ENCODE measurements at regions of chr11 and their contacts with region 1.

Region 1: GRCh38 chr11:102495161-102496042 is 35.1 kb downstream of the MMP7 start:
- DNase-seq: peak; percentile 73
- ATAC-seq: peak; percentile 85
- H3K4me3 ChIP-seq: peak overlapping the region in 1 of 2 experiments; percentile 33; a peak in 2 of 4 replicates
- H3K27ac ChIP-seq: peak overlapping the region; percentile 95
- H3K4me1 ChIP-seq: peaks cover 36% of the 10 kb centered on the region
- H3K27me3 ChIP-seq: no peaks in the 10 kb centered on the region
- CTCF ChIP-seq: peak; percentile 75

Region 2: GRCh38 chr11:102287964-102288724 is 207.3 kb before region 1 on chr11:
- CTCF ChIA-PET with region 1: no interaction called
- POLR2A ChIA-PET with region 1: no interaction called
- in situ Hi-C with region 1: no loop called
- intact Hi-C with region 1: loop called (anchors 5 kb)
- DNase-seq: peak; percentile 81
- ATAC-seq: peak; percentile 91
- H3K4me3 ChIP-seq: peak overlapping the region; percentile 18 to 47
- H3K27ac ChIP-seq: peak overlapping the region; percentile 95
- H3K4me1 ChIP-seq: peaks cover 46% of the 10 kb centered on the region
- H3K27me3 ChIP-seq: no peaks in the 10 kb centered on the region
- CTCF ChIP-seq: peak; percentile 86

Region 3: DNA sequence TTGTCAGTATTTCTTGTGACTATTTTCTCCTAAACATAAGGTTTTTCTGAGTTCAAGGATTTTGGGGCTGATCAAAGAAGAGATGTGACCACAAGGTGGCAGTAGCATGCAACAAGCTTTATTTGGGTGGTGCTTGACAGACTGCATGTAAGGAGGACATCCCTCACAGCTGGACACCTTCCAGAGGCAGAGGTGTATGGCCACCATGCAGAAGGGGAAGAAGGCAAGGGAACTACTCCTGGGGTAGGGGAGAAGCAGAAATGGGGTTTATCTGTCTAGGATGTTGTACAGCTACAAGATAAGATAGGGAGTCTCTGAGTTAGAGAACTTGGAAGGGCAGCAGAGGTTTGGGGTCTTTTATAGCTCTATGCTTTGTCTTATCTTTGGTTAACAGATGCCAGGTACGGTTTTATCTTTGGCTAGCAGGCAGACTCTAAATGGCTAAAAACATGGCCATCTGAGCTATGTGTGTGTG is 153.5 kb before region 1 on chr11:
- CTCF ChIA-PET with region 1: interaction called, 8 read pairs
- POLR2A ChIA-PET with region 1: no interaction called
- in situ Hi-C with region 1: no loop called
- intact Hi-C with region 1: loop called (anchors 1 kb)
- DNase-seq: no peak
- ATAC-seq: peak; percentile 70
- H3K4me3 ChIP-seq: no peak overlapping the region
- H3K27ac ChIP-seq: peak overlapping the region; percentile 75
- H3K4me1 ChIP-seq: peaks cover 38% of the 10 kb centered on the region
- H3K27me3 ChIP-seq: no peaks in the 10 kb centered on the region
- CTCF ChIP-seq: peak; percentile 91

Region 4: GRCh38 chr11:102377891-102378290 is 117.5 kb before region 1 on chr11:
- CTCF ChIA-PET with region 1: no interaction called
- POLR2A ChIA-PET with region 1: no interaction called
- in situ Hi-C with region 1: no loop called
- intact Hi-C with region 1: no loop called
- DNase-seq: no peak
- ATAC-seq: no peak
- H3K4me3 ChIP-seq: no peak overlapping the region
- H3K27ac ChIP-seq: no peak overlapping the region
- H3K4me1 ChIP-seq: peaks cover 6% of the 10 kb centered on the region; the same call in 1 of the 2 replicates
- H3K27me3 ChIP-seq: no peaks in the 10 kb centered on the region
- CTCF ChIP-seq: no peak

Region 5: DNA sequence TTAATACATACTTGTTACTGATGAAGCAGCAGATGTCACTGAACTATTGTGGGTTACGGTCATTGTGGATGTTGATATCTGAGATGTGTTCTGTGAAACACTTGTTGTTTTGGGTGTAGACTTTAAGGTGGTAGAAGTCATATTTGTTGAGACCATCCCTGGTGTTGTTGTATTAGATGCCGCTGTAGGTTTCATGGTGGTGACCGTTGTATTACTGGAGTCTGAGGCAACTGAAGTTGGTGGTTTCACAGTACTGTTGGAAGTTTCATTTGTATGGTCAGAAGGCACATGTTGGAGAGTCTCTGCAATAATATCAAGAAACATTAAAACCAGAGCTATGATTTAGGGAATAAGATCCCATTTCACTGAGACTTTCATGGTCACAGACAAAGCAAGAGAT is 93.5 kb before region 1 on chr11:
- CTCF ChIA-PET with region 1: no interaction called
- POLR2A ChIA-PET with region 1: interaction called, 3 read pairs
- in situ Hi-C with region 1: no loop called
- intact Hi-C with region 1: loop called (anchors 5 kb)
- DNase-seq: no peak
- ATAC-seq: no peak
- H3K4me3 ChIP-seq: no peak overlapping the region
- H3K27ac ChIP-seq: peak overlapping the region; percentile 0
- H3K4me1 ChIP-seq: peaks cover 38% of the 10 kb centered on the region
- H3K27me3 ChIP-seq: no peaks in the 10 kb centered on the region
- CTCF ChIP-seq: no peak

Region 6: GRCh38 chr11:102451681-102452460 is 43.5 kb before region 1 on chr11:
- CTCF ChIA-PET with region 1: interaction called, 4 read pairs
- POLR2A ChIA-PET with region 1: no interaction called
- in situ Hi-C with region 1: no loop called
- intact Hi-C with region 1: loop called (anchors 1 kb)
- DNase-seq: no peak
- ATAC-seq: peak; percentile 65
- H3K4me3 ChIP-seq: peak overlapping the region; percentile 73 to 84
- H3K27ac ChIP-seq: peak overlapping the region; percentile 98
- H3K4me1 ChIP-seq: peaks cover 64% of the 10 kb centered on the region
- H3K27me3 ChIP-seq: no peaks in the 10 kb centered on the region
- CTCF ChIP-seq: peak; percentile 26

Region 7: GRCh38 chr11:102469172-102469821 is 26.1 kb before region 1 on chr11:
- CTCF ChIA-PET with region 1: no interaction called
- POLR2A ChIA-PET with region 1: no interaction called
- in situ Hi-C with region 1: no loop called
- intact Hi-C with region 1: no loop called
- DNase-seq: no peak
- ATAC-seq: no peak
- H3K4me3 ChIP-seq: no peak overlapping the region
- H3K27ac ChIP-seq: peak overlapping the region; percentile 72; the same call in 1 of the 2 replicates
- H3K4me1 ChIP-seq: peaks cover 25% of the 10 kb centered on the region
- H3K27me3 ChIP-seq: no peaks in the 10 kb centered on the region
- CTCF ChIP-seq: no peak

Region 8: GRCh38 chr11:102614485-102614884 is 119.1 kb after region 1 on chr11:
- CTCF ChIA-PET with region 1: interaction called, 9 read pairs
- POLR2A ChIA-PET with region 1: no interaction called
- in situ Hi-C with region 1: no loop called
- intact Hi-C with region 1: loop called (anchors 2 kb)
- DNase-seq: no peak
- ATAC-seq: no peak
- H3K4me3 ChIP-seq: no peak overlapping the region
- H3K27ac ChIP-seq: peak overlapping the region; percentile 80; the same call in 1 of the 2 replicates
- H3K4me1 ChIP-seq: peaks cover 27% of the 10 kb centered on the region
- H3K27me3 ChIP-seq: no peaks in the 10 kb centered on the region
- CTCF ChIP-seq: peak; percentile 64

Region 9: DNA sequence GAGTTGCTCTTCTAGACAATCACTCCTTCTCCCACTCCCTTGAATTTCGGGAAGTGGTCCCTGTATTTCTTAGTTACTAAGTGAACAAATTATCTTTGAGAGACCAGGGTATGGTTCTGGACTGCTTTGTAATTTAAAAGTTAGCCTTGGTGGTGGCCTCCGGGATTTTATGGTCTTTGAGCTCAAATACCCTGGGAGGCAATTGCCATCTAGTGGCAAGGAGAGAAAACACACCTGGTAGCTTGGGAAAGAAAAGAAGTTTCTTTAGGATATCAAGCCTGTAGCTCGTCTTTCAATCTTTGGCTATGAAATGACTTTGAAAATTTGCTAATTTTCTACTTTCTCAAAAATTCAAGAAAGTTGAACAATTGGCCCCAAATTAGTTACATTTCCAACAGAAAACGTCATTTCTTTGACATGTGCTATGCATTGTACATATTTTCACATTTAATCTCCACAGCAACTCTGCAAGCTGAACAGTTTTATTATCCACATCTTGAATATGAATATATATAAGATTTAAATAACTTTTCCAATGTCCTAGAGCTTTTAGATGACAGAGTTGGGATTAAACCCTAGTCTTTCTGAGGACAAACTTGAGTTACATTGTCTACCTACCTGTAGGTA is 171.0 kb after region 1 on chr11:
- CTCF ChIA-PET with region 1: interaction called, 13 read pairs
- POLR2A ChIA-PET with region 1: no interaction called
- in situ Hi-C with region 1: no loop called
- intact Hi-C with region 1: loop called (anchors 5 kb)
- DNase-seq: peak; percentile 41
- ATAC-seq: peak; percentile 86
- H3K4me3 ChIP-seq: no peak overlapping the region
- H3K27ac ChIP-seq: peak overlapping the region; percentile 44; the same call in 1 of the 2 replicates
- H3K4me1 ChIP-seq: peaks cover 10% of the 10 kb centered on the region
- H3K27me3 ChIP-seq: no peaks in the 10 kb centered on the region
- CTCF ChIP-seq: peak; percentile 92